Posterior cingulate gyrus (tissue), 11 donors: ENCODE measurements at regions of chr7 and their contacts with region 1.

Region 1: GRCh38 chr7:51067757-51068156 is 248.9 kb downstream of the COBL start:
- DNase-seq: peak in 6 of 10 donors; percentile 21 to 90 (median 56)

Region 2: GRCh38 chr7:50793115-50793946 is 274.4 kb before region 1 on chr7:
- intact Hi-C with region 1: loop called (anchors 5 kb)
- DNase-seq: peak in 2 of 10 donors; percentile 27 to 62

Region 3: GRCh38 chr7:51009704-51010496 is 57.9 kb before region 1 on chr7:
- intact Hi-C with region 1: no loop called
- DNase-seq: no peak

Region 4: DNA sequence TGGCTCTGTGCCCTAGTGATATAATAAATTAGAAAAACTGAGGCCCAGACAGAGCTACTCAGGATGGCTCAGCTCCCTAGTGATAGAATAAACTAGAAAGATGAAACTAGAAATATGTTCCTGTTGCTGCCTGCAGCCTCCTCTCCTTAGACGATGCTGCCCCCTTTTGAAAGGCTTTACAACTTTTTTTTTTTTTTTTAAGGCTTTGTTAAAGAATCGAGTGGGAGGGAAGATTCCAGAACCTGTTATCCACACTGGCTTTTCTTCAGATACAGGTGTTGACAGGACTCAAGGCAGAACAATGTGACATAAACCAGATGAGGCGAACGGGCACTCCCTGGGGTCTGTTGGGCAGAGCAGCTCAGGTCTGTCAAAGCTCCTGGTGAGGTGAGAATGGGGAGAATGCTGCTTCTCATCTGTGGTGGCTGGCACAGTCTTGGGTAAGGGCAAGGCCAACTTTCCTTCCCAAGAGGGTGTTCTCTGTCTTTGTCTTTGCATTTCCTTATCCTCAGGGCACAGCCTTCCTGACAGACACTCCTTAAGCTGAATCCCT is 73.8 kb after region 1 on chr7:
- intact Hi-C with region 1: loop called (anchors 5 kb)
- DNase-seq: no peak